Naive thymus-derived CD4-positive, alpha-beta T cell (primary cell): ENCODE measurements at regions of chr11 and their contacts with region 1.

Region 1: GRCh38 chr11:125902927-125903710 is at the start of gene PUS3:
- DNase-seq: peak; percentile 73 to 88 (median 83)
- ATAC-seq: peak; percentile 96
- H3K4me3 ChIP-seq: peak within 1 kb of the TSS; percentile 91
- H3K4me3 Mint-ChIP-seq: peak within 1 kb of the TSS; percentile 82 to 98 (median 96)
- H3K27ac ChIP-seq: peak within 1 kb of the TSS; percentile 86
- H3K27ac Mint-ChIP-seq: peak within 1 kb of the TSS; percentile 83 to 96 (median 92)
- H3K4me1 ChIP-seq: peaks cover 7 to 13% of the 10 kb centered on the region in 2 donors
- H3K4me1 Mint-ChIP-seq: peaks cover 21 to 54% (median 39%) of the 10 kb centered on the region in 7 donors
- H3K27me3 ChIP-seq: peaks cover 0 to 4% of the 10 kb centered on the region in 2 donors
- H3K27me3 Mint-ChIP-seq: peaks cover 18 to 40% (median 29%) of the 10 kb centered on the region in 5 donors
- total RNA-seq, gene PUS3: 4.6 to 15.3 (median 9.3) TPM

Region 2: GRCh38 chr11:124837491-124837856 is 1065.6 kb before region 1 on chr11:
- CTCF ChIA-PET with region 1: no interaction called
- POLR2A ChIA-PET with region 1: no interaction called
- intact Hi-C with region 1: no loop called
- DNase-seq: peak in 5 of 9 donors; percentile 13 to 35 (median 33)
- ATAC-seq: peak; percentile 63
- H3K4me3 ChIP-seq: no peak overlapping the region
- H3K4me3 Mint-ChIP-seq: peak overlapping the region in 6 of 10 donors; percentile 3 to 83 (median 74)
- H3K27ac ChIP-seq: no peak overlapping the region
- H3K27ac Mint-ChIP-seq: peak overlapping the region in 1 of 9 donors; percentile 35
- H3K4me1 ChIP-seq: no peaks in the 10 kb centered on the region
- H3K4me1 Mint-ChIP-seq: peaks cover 9 to 25% (median 16%) of the 10 kb centered on the region in 7 donors
- H3K27me3 ChIP-seq: peaks cover 18 to 20% of the 10 kb centered on the region in 2 donors
- H3K27me3 Mint-ChIP-seq: peaks cover 58 to 85% (median 67%) of the 10 kb centered on the region in 5 donors

Region 3: DNA sequence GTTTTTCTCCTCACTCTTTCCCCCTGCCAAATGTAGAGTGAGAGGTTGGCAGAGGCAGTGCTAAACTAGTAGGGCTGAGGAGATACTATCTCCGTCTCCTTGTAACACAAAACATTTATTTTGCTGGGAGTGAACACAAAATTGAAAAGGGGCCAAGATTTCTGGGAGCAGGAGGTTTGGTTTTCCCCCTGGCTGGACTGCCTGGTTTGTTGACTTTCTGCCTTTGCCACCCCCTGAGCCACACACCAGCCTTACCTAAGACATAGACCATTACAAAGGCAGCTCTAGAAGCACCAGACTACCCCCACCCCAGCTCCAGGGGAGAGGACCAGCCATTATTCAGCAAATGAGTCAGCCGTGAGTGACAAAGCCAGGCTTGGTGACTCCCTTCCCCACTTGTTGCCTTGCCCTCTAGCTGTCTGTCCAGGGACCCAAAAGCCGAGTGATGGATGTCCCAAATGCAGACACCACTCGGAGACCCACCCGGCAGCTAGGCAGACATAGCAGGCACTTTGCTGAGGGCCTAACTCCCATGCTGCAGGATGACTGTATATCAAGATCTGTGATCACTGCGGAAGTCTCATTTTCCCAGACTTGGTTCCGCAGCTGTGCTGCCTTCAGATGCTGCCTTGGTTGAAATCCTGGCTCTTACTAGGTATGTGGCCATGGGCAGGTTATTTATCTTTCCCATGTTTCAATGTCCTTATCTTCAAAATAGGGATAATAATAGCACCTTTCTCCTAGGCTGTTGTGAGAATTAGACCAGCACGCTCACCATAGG is 177.2 kb after region 1 on chr11:
- CTCF ChIA-PET with region 1: no interaction called
- POLR2A ChIA-PET with region 1: no interaction called
- intact Hi-C with region 1: loop called in 1 of 2 experiments (anchors 5 kb)
- DNase-seq: no peak
- ATAC-seq: no peak
- H3K4me3 ChIP-seq: no peak overlapping the region
- H3K4me3 Mint-ChIP-seq: no peak overlapping the region
- H3K27ac ChIP-seq: no peak overlapping the region
- H3K27ac Mint-ChIP-seq: peak overlapping the region in 1 of 9 donors; percentile 6
- H3K4me1 ChIP-seq: peaks cover 11 to 25% of the 10 kb centered on the region in 2 donors
- H3K4me1 Mint-ChIP-seq: peaks cover 16 to 27% (median 23%) of the 10 kb centered on the region in 7 donors
- H3K27me3 ChIP-seq: no peaks in the 10 kb centered on the region
- H3K27me3 Mint-ChIP-seq: no peaks in the 10 kb centered on the region

Region 4: GRCh38 chr11:126282736-126283591 is 379.8 kb after region 1 on chr11 and contains the start of gene TIRAP:
- CTCF ChIA-PET with region 1: no interaction called
- POLR2A ChIA-PET with region 1: no interaction called
- intact Hi-C with region 1: loop called in 1 of 2 experiments (anchors 5 kb)
- DNase-seq: peak; percentile 55 to 77 (median 75)
- ATAC-seq: peak; percentile 79
- H3K4me3 ChIP-seq: peak within 1 kb of the TSS; percentile 77
- H3K4me3 Mint-ChIP-seq: peak within 1 kb of the TSS; percentile 88 to 100 (median 98)
- H3K27ac ChIP-seq: peak within 1 kb of the TSS; percentile 86
- H3K27ac Mint-ChIP-seq: peak within 1 kb of the TSS; percentile 93 to 99 (median 97)
- H3K4me1 ChIP-seq: peaks cover 16 to 28% of the 10 kb centered on the region in 2 donors
- H3K4me1 Mint-ChIP-seq: peaks cover 35 to 62% (median 55%) of the 10 kb centered on the region in 7 donors
- H3K27me3 ChIP-seq: no peaks in the 10 kb centered on the region
- H3K27me3 Mint-ChIP-seq: no peaks in the 10 kb centered on the region
- total RNA-seq, gene TIRAP: 12.9 to 21.5 (median 17.9) TPM